ENCODE measurements at regions of chr2 and their contacts with region 1.

Region 1: GRCh38 chr2:88691339-88692183 is at the start of gene RPIA:
- DNase-seq: peak; percentile 98 to 99 (median 98)
- H3K4me3 ChIP-seq: peak within 1 kb of the TSS; percentile 97
- H3K4me3 Mint-ChIP-seq: peak within 1 kb of the TSS; percentile 93 to 98 (median 96)
- H3K27ac ChIP-seq: peak within 1 kb of the TSS; percentile 79
- H3K27ac Mint-ChIP-seq: peak within 1 kb of the TSS; percentile 86 to 99 (median 96)
- H3K4me1 ChIP-seq: peaks cover 30% of the 10 kb centered on the region
- H3K4me1 Mint-ChIP-seq: peaks cover 51 to 65% (median 64%) of the 10 kb centered on the region in 3 donors
- H3K27me3 ChIP-seq: no peaks in the 10 kb centered on the region
- H3K27me3 Mint-ChIP-seq: no peaks in the 10 kb centered on the region
- total RNA-seq, gene RPIA: 69.0 to 70.2 TPM

Region 2: DNA sequence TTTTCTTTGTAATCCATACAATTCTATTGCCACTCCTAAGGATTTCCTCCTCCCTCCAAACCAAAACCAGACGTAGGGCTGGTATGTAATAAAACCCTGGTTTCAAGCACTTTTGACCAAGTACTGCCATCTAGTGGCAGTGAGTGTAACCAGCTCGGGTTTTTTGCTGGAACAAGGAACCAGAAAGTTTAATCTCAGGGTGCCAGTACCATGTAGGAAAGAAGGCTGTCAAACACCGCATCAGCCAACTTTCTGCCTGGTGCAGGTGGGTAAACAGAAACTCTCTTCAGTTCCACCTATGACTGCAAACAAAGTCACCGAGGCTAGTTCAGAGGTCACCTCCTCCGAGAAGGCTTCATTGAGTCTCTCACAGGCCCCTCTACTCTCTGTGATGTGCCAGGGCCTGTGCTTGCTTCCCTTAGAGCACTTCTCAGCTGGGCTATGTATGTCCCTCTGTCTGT is 531.6 kb before region 1 on chr2:
- CTCF ChIA-PET with region 1: no interaction called
- POLR2A ChIA-PET with region 1: no interaction called
- DNase-seq: peak; percentile 5 to 70 (median 37)
- H3K4me3 ChIP-seq: no peak overlapping the region
- H3K4me3 Mint-ChIP-seq: no peak overlapping the region
- H3K27ac ChIP-seq: no peak overlapping the region
- H3K27ac Mint-ChIP-seq: no peak overlapping the region
- H3K4me1 ChIP-seq: no peaks in the 10 kb centered on the region
- H3K4me1 Mint-ChIP-seq: no peaks in the 10 kb centered on the region
- H3K27me3 ChIP-seq: no peaks in the 10 kb centered on the region
- H3K27me3 Mint-ChIP-seq: peaks cover 2 to 4% of the 10 kb centered on the region in 2 donors

Region 3: GRCh38 chr2:88517759-88518201 is 173.8 kb before region 1 on chr2:
- CTCF ChIA-PET with region 1: no interaction called
- POLR2A ChIA-PET with region 1: no interaction called
- DNase-seq: no peak
- H3K4me3 ChIP-seq: no peak overlapping the region
- H3K4me3 Mint-ChIP-seq: no peak overlapping the region
- H3K27ac ChIP-seq: no peak overlapping the region
- H3K27ac Mint-ChIP-seq: no peak overlapping the region
- H3K4me1 ChIP-seq: no peaks in the 10 kb centered on the region
- H3K4me1 Mint-ChIP-seq: no peaks in the 10 kb centered on the region
- H3K27me3 ChIP-seq: no peaks in the 10 kb centered on the region
- H3K27me3 Mint-ChIP-seq: peaks cover 16 to 33% of the 10 kb centered on the region in 2 donors

Region 4: GRCh38 chr2:88627056-88627855 is 64.3 kb before region 1 on chr2 and contains the start of gene EIF2AK3:
- CTCF ChIA-PET with region 1: interaction called, 7 read pairs
- POLR2A ChIA-PET with region 1: interaction called, 13 read pairs
- DNase-seq: peak; percentile 89 to 98 (median 97)
- H3K4me3 ChIP-seq: peak within 1 kb of the TSS; percentile 97
- H3K4me3 Mint-ChIP-seq: peak within 1 kb of the TSS in 6 of 7 donors; percentile 81 to 96 (median 94)
- H3K27ac ChIP-seq: peak within 1 kb of the TSS; percentile 98
- H3K27ac Mint-ChIP-seq: peak within 1 kb of the TSS; percentile 85 to 97 (median 94)
- H3K4me1 ChIP-seq: peaks cover 36% of the 10 kb centered on the region
- H3K4me1 Mint-ChIP-seq: peaks cover 8 to 10% (median 9%) of the 10 kb centered on the region in 3 donors
- H3K27me3 ChIP-seq: no peaks in the 10 kb centered on the region
- H3K27me3 Mint-ChIP-seq: no peaks in the 10 kb centered on the region
- total RNA-seq, gene EIF2AK3: 13.0 to 15.0 TPM